WTC11 (cell line): ENCODE measurements at regions of chr11 and their contacts with region 1.

Region 1: DNA sequence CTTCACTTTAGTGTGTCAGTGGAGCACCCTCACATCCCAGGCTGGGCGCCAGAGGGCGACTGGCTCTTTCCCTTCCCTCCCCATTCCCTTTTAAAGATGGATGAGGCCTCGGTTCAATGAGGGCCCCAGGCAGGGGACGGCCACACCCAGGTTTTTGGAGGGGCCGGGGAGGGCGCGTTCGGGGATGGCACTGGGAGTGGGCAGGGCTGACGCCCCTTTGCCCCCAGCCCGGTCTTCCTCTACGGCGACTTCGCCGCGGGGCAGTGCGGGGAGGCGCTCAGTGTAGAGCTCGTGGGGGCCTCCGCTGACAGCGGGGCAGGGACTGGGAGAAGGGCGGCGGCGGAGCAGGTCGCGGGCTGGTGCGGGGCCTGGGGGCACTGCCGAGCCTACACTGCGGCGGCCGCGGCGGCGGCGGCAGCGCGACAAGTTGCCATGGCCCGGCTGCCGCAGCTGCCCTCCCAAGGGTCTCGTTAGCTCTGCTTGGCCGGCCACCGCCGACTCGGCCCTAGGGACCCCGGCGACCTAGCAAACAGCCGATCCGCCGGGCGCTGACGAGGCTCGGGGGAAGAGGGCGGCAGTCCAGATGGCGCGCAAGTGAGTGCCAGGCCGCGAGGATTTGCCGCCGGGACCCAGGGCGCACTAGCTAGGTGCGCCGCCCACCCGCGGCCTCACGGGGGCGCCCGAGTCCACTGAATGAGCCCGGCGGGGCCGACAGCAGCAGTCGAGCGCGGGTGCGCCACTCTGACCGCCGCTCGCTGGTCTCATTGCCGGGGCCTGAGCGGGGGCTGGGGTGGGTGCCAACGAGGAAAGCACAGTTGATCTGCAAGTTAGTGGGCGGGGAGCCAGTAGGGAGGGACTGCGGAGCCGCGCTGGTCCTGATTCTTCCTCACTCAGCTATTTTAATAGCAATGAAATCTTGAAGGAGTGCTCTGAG is 92.7 kb downstream of the RRM1 start:
- DNase-seq: peak; percentile 93
- ATAC-seq: peak; percentile 89
- H3K4me3 Mint-ChIP-seq: peak overlapping the region; percentile 73
- H3K27ac Mint-ChIP-seq: no peak overlapping the region
- H3K4me1 Mint-ChIP-seq: no peaks in the 10 kb centered on the region
- H3K27me3 Mint-ChIP-seq: peaks cover 18% of the 10 kb centered on the region; the same call in 1 of the 2 replicates
- CTCF ChIP-seq: peak; percentile 97

Region 2: DNA sequence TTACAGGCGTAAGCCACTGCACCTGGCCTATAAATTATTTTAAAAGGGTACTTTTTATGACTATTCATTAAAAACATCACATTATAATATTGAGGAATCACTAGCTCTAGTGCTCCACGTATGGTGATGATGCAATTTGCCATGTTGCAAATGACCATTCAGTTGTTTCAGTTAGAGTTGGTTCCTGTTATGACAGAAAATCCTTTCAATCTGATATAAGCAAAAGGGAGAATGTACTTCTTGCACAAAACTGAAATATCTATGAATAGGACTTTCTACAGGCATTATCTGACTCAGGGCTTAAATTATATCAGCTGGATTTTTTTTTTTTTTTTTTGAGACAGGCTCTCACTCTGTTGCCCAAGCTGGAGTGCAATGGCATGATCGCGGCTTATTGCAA is 138.3 kb before region 1 on chr11:
- CTCF ChIA-PET with region 1: no interaction called
- POLR2A ChIA-PET with region 1: no interaction called
- DNase-seq: no peak
- ATAC-seq: no peak
- H3K4me3 Mint-ChIP-seq: no peak overlapping the region
- H3K27ac Mint-ChIP-seq: no peak overlapping the region
- H3K4me1 Mint-ChIP-seq: no peaks in the 10 kb centered on the region
- H3K27me3 Mint-ChIP-seq: no peaks in the 10 kb centered on the region
- CTCF ChIP-seq: no peak

Region 3: GRCh38 chr11:4125141-4125540 is 62.2 kb before region 1 on chr11:
- CTCF ChIA-PET with region 1: no interaction called
- POLR2A ChIA-PET with region 1: no interaction called
- DNase-seq: no peak
- ATAC-seq: no peak
- H3K4me3 Mint-ChIP-seq: no peak overlapping the region
- H3K27ac Mint-ChIP-seq: no peak overlapping the region
- H3K4me1 Mint-ChIP-seq: no peaks in the 10 kb centered on the region
- H3K27me3 Mint-ChIP-seq: no peaks in the 10 kb centered on the region
- CTCF ChIP-seq: no peak

Region 4: DNA sequence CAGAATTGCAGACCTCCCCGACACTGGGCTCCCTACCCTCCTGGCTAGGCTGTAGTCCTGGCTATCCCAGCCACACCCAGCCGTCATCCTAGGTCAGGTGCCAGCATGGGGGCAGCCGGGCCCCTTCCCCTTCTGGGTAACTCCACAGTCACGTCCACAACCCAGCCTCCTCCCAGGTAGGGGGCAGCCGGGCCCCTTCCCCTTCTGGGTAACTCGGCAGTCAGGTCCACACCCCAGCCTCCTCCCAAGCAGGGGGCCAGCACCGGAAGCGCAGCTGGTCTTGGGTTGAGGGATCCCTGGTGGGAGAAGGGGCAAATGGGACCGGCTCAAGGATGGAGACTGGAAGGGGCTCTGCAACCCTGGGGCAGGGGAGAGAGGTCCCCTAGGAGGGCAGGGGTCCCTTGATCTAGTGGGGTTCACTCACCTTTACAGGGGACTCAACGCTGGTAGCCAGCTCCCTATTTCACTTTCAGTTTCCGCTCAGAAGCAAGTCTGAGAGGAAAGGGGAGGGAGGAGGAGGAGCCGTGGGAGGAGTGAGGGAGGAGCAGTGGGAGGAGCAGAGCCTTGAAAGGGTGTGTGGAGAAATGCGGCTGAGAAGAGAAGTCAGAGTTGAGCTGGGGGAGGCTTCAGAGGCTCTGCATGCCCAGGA is 206.0 kb after region 1 on chr11 and contains the start of gene TRIM21:
- CTCF ChIA-PET with region 1: interaction called, 20 read pairs
- POLR2A ChIA-PET with region 1: interaction called, 3 read pairs
- DNase-seq: peak; percentile 84
- ATAC-seq: peak; percentile 99
- H3K4me3 Mint-ChIP-seq: peak within 1 kb of the TSS; percentile 83
- H3K27ac Mint-ChIP-seq: no peak within 1 kb of the TSS
- H3K4me1 Mint-ChIP-seq: peaks cover 10% of the 10 kb centered on the region
- H3K27me3 Mint-ChIP-seq: peaks cover 8% of the 10 kb centered on the region
- CTCF ChIP-seq: no peak
- total RNA-seq, gene TRIM21: 14.8 to 20.5 TPM (median 17.1 TPM) in 3 replicates

Region 5: DNA sequence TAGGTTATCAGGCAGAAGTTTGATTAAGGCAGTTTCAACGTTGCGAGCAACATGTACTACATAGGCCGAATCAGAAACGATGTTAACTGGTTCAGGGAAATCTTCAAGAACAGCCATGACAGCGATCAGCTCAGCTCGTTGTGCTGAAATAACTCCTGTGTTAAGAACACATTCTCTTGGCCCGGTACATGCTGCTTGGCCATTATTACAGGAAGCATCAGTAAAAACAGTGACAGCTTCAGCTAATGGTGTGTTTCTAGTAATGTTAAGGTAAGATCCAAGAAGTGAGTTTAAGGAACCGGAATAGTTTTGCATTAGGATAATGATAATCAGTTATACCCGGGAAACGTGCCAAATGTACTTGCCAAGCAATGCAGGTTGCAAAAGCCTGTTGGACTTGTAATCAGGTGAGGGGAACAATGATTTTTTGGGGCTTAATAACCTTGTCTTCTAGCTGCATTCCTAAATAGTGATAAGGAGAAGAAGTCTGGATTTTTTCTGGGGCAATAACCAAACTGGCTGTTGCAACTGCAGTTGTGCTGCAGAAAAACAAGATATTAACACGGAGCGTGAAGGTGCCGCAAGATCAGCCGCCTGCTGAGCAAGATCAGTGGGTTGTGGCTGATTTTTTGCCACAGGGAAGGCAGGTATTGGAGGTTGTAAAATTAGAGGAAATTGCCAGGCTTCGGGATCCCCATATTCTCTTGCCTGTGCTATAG is 309.4 kb after region 1 on chr11:
- CTCF ChIA-PET with region 1: interaction called, 52 read pairs
- POLR2A ChIA-PET with region 1: no interaction called
- DNase-seq: no peak
- ATAC-seq: no peak
- H3K4me3 Mint-ChIP-seq: no peak overlapping the region
- H3K27ac Mint-ChIP-seq: no peak overlapping the region
- H3K4me1 Mint-ChIP-seq: peaks cover 6% of the 10 kb centered on the region
- H3K27me3 Mint-ChIP-seq: no peaks in the 10 kb centered on the region
- CTCF ChIP-seq: no peak

Region 6: DNA sequence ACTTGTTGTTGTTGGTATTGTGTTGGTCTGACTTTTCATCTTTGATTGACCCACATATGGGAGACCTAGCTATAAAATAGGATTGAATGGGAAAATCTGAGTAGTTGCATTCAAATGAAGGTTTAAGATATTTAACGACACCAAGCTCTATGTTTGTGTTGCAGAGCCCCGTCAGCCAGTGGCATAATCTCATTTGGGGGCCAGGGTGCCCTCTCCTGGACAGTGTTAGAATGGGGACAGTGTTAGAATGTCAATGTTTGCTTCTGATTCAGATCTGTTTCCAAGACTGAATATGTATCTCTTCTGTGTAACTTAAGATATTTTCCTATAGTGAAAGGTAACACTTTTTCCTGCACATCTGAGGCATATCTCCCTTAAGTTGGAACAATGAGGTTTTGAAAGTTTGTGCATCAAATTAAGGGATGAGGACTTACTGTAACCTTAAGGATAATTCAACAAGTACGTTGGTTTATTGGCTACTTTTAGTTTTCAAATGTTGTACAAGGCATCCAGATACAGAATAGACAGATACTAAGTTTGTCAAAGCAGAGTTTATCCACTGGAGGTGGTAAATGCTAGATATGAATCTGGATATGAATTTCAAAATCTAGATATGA is 352.4 kb after region 1 on chr11:
- CTCF ChIA-PET with region 1: interaction called, 104 read pairs
- POLR2A ChIA-PET with region 1: interaction called, 3 read pairs
- DNase-seq: peak; percentile 66
- ATAC-seq: peak; percentile 89
- H3K4me3 Mint-ChIP-seq: no peak overlapping the region
- H3K27ac Mint-ChIP-seq: no peak overlapping the region
- H3K4me1 Mint-ChIP-seq: no peaks in the 10 kb centered on the region
- H3K27me3 Mint-ChIP-seq: peaks cover 9% of the 10 kb centered on the region
- CTCF ChIP-seq: peak; percentile 47

Region 7: DNA sequence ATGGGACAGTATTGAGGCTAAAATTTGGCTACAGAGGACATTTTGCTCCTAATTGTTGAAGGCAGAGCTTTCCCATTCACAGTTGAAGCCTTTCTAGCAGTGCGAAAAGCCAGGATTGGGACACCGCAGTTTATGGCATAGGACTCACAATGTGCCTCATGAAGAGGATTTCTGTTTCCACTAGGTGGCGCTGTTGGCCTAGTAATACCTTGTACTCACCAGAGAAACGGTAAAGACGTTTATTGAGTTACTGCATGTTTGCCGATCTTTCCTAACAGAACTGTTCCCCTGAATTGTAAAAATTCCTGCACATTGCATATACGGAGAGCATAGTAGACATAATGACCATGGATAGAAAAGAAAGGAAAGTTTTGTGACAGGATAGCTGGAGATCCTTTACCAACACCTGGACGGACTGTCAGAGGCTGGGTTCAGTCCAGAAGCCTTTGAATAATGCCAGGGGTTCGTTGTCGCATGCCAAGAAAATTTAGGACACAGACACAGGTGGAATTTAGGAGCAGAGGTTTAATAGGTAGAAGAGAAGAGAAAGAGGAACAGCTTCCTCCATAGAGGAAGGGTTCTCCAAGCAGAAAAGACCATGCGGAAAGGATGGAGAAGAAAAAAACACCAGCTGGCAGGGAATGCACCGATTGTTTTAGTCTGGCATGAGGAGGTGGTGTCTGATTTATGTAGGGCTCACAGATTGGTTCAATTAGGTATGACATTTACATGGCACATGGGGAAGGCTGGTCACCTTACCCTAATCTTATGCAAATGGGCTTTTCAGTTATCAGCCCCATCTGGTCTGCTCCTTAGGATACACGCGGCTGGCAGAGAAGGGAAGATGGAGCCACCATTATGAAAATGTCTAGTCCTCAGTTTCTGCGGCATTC is 439.1 kb after region 1 on chr11:
- CTCF ChIA-PET with region 1: interaction called, 15 read pairs
- POLR2A ChIA-PET with region 1: no interaction called
- DNase-seq: peak; percentile 82
- ATAC-seq: peak; percentile 95
- H3K4me3 Mint-ChIP-seq: peak overlapping the region; percentile 12
- H3K27ac Mint-ChIP-seq: no peak overlapping the region
- H3K4me1 Mint-ChIP-seq: peaks cover 28% of the 10 kb centered on the region
- H3K27me3 Mint-ChIP-seq: peaks cover 2% of the 10 kb centered on the region; the same call in 1 of the 2 replicates
- CTCF ChIP-seq: peak; percentile 87